Caco-2 (cell line): ENCODE measurements at regions of chr1 and their contacts with region 1.

Region 1: DNA sequence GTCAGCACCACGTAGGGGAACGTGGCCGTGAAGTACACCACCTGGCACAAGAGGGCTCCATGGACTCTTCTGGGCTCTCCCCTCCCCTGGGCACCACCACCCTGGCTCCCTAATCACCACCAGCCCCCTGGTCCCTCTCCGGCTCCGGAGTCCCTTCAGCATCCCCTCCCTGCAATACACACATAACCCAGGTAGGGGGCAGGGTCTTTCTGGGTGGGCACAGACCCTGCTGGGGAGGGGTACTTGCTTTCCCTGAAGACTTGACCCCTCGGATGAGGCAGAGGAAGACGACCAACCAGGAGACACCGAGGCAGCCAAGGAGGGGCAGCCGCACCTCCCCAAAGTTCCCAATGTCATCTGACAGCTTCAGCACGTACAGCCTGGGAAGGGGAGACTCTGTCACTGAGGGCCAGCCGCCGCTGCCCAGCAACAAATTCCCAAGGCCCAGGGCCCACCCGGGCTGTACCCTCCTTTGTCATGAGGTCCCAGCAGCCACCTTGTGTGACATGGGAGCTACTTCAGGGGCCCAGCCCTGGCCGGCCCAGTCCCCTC is 11.3 kb downstream of the CCDC24 start:
- DNase-seq: no peak
- H3K4me3 ChIP-seq: no peak overlapping the region
- H3K4me3 Mint-ChIP-seq: no peak overlapping the region
- H3K27ac Mint-ChIP-seq: no peak overlapping the region
- H3K4me1 ChIP-seq: no peaks in the 10 kb centered on the region
- H3K4me1 Mint-ChIP-seq: no peaks in the 10 kb centered on the region
- H3K27me3 ChIP-seq: no peaks in the 10 kb centered on the region
- H3K27me3 Mint-ChIP-seq: no peaks in the 10 kb centered on the region
- CTCF ChIP-seq: peak in 1 of 2 experiments; percentile 30

Region 2: DNA sequence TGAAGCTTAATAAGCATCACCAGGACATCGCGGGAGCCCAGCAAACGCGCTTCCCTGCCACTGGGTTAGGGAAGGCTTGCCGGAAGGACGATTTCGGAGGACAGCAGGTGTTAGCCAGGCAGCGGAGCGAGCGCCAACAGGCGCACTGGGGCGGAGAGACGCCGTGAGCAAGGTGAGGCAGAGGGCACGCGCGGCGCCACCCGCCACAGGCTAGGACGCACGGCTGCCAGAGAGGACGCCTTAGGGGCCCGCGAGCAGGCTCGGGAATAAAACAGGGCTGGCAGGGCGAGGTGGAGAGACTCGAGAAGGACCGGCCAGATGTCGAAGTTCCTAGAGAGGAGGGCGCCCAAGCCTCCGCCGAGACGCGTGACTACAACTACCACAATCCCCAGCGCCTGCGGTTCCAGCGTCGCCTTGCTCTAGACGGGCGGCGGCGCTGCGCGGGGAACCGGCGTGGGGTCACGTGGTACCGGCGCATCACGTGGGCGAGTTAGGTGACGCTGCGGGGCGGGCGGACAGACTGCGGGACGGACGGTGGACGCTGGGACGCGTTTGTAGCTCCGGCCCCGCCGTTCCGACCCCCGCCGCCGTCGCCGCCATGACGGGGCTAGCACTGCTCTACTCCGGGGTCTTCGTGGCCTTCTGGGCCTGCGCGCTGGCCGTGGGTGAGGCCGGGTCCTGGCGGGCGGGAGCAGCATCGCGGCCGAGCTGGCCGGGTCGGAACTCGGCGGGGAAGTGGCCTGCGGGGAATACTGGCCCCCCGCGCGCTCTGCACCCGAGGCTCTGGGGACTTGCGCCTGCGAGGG is 28.0 kb before region 1 on chr1 and contains the start of gene ATP6V0B:
- CTCF ChIA-PET with region 1: no interaction called
- POLR2A ChIA-PET with region 1: no interaction called
- intact Hi-C with region 1: no loop called
- DNase-seq: peak; percentile 91 to 93
- H3K4me3 ChIP-seq: peak within 1 kb of the TSS; percentile 96
- H3K4me3 Mint-ChIP-seq: peak within 1 kb of the TSS; percentile 91
- H3K27ac Mint-ChIP-seq: peak within 1 kb of the TSS; percentile 88
- H3K4me1 ChIP-seq: peaks cover 17% of the 10 kb centered on the region
- H3K4me1 Mint-ChIP-seq: peaks cover 17% of the 10 kb centered on the region
- H3K27me3 ChIP-seq: no peaks in the 10 kb centered on the region
- H3K27me3 Mint-ChIP-seq: no peaks in the 10 kb centered on the region
- CTCF ChIP-seq: peak in 1 of 2 experiments; percentile 23
- total RNA-seq, gene ATP6V0B: 89.9 and 91.2 TPM in 2 replicates

Region 3: DNA sequence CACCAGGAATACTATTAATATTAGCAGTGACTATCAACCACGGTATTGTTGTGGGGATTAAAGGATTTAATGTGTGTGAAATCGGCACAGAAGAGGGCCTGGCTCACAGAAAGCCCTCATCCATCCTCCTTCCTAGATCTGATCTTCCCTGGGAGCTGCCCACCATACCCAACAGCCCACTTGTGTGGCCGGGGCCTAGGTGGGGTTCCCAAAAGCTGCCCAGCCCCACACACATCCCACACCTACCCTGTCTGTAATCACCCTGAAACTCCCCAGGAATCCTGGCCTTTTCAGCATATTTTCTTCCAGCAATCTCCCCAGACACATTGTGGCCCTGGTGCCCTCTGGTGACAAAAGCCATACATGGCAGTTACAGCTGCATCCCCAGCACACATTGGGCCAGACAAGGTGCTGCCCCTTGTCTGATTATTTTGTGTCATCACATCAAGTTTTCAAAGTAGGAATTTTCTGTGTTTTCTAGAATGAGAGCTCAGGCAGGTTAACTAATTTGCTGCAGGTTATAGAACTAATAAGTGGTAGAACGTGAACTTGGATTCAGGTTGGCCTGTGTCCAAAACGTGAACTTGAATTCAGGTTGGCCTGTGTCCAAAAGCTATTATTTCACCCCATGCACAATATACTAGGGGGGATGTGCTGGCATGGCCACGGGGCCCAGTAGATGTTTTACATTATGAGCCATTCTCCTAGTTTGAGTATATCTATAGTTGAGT is 33.9 kb after region 1 on chr1:
- CTCF ChIA-PET with region 1: interaction called, 16 read pairs
- POLR2A ChIA-PET with region 1: interaction called, 3 read pairs
- intact Hi-C with region 1: loop called (anchors 1 kb)
- DNase-seq: peak; percentile 66 to 75
- H3K4me3 ChIP-seq: no peak overlapping the region
- H3K4me3 Mint-ChIP-seq: no peak overlapping the region
- H3K27ac Mint-ChIP-seq: peak overlapping the region; percentile 48
- H3K4me1 ChIP-seq: peaks cover 15% of the 10 kb centered on the region
- H3K4me1 Mint-ChIP-seq: peaks cover 16% of the 10 kb centered on the region
- H3K27me3 ChIP-seq: no peaks in the 10 kb centered on the region
- H3K27me3 Mint-ChIP-seq: no peaks in the 10 kb centered on the region
- CTCF ChIP-seq: peak; percentile 59 to 81

Region 4: DNA sequence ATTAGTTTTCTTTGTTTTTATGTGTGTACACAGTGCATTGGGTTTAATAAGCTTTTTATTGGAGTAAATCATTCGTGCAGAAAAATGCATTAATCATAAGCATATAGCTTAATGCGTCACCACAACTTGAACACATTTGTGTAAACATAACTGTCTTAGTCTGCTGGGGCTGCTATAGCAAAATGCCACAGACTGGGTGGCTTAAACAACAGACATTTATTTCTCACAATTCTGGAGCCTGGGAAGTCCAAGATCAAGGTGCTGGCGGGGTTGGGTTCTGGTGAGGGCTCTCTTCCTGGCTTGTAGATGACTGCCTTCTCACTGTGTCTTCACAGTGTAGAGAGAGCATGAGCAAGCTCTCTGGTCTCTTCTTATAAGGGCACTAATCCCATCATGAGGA is 46.1 kb after region 1 on chr1:
- CTCF ChIA-PET with region 1: interaction called, 7 read pairs
- POLR2A ChIA-PET with region 1: no interaction called
- intact Hi-C with region 1: loop called (anchors 1 kb)
- DNase-seq: no peak
- H3K4me3 ChIP-seq: no peak overlapping the region
- H3K4me3 Mint-ChIP-seq: no peak overlapping the region
- H3K27ac Mint-ChIP-seq: no peak overlapping the region
- H3K4me1 ChIP-seq: peaks cover 9% of the 10 kb centered on the region; the same call in 1 of the 2 replicates
- H3K4me1 Mint-ChIP-seq: peaks cover 10% of the 10 kb centered on the region
- H3K27me3 ChIP-seq: no peaks in the 10 kb centered on the region
- H3K27me3 Mint-ChIP-seq: no peaks in the 10 kb centered on the region
- CTCF ChIP-seq: no peak

Region 5: DNA sequence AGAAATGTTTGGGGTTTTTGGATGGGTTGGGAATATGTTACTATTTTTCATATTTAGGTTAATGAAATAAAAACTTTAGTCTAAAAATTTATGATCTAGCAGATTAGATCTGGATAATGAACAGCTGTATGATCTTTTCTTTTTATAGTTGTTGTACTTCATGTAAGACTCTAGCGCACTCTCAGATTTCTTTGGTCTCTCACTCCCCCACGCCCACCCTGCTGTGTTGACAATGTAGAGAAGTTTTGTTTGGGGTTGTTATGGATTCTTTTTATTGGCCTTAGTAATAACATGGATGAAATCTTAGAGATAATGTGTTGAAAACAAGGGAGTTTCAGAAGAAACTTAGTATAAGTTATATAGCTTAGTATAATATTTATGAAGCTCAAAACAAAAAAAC is 133.2 kb after region 1 on chr1:
- CTCF ChIA-PET with region 1: no interaction called
- POLR2A ChIA-PET with region 1: no interaction called
- intact Hi-C with region 1: no loop called
- DNase-seq: no peak
- H3K4me3 ChIP-seq: no peak overlapping the region
- H3K4me3 Mint-ChIP-seq: no peak overlapping the region
- H3K27ac Mint-ChIP-seq: no peak overlapping the region
- H3K4me1 ChIP-seq: no peaks in the 10 kb centered on the region
- H3K4me1 Mint-ChIP-seq: peaks cover 6% of the 10 kb centered on the region
- H3K27me3 ChIP-seq: no peaks in the 10 kb centered on the region
- H3K27me3 Mint-ChIP-seq: peaks cover 3% of the 10 kb centered on the region
- CTCF ChIP-seq: no peak